ENCODE measurements at regions of chr17 and their contacts with region 1.

Region 1: GRCh38 chr17:8806926-8807550 is 7.9 kb upstream of the MFSD6L start:
- DNase-seq: no peak
- H3K4me3 ChIP-seq: no peak overlapping the region
- H3K27ac ChIP-seq: no peak overlapping the region
- H3K4me1 ChIP-seq: no peaks in the 10 kb centered on the region
- H3K27me3 ChIP-seq: peaks cover 9% of the 10 kb centered on the region
- CTCF ChIP-seq: no peak

Region 2: GRCh38 chr17:8894673-8895578 is 87.9 kb after region 1 on chr17:
- intact Hi-C with region 1: loop called (anchors 10 kb)
- DNase-seq: peak; percentile 53
- H3K4me3 ChIP-seq: peak overlapping the region; percentile 29
- H3K27ac ChIP-seq: no peak overlapping the region
- H3K4me1 ChIP-seq: peaks cover 6% of the 10 kb centered on the region
- H3K27me3 ChIP-seq: no peaks in the 10 kb centered on the region
- CTCF ChIP-seq: peak; percentile 90